Activated T-helper 1 cell treated with anti-CD3 and anti-CD28 coated beads, Interleukin-12 subunit alpha, Interleukin-12 subunit beta, Interleukin-2, Interleukin-4 antibody, amounts not matched to agents 30 ng/mL and 10 ng/mL and 1 ng/mL, durations not matched to agents 14 hours and 24 hours and 36 hours (primary cell): ENCODE measurements at regions of chr22 and their contacts with region 1.

Region 1: GRCh38 chr22:21001560-21002325 is at the start of gene THAP7:
- DNase-seq: peak; percentile 92
- H3K4me3 Mint-ChIP-seq: peak within 1 kb of the TSS; percentile 89
- H3K27ac Mint-ChIP-seq: peak within 1 kb of the TSS; percentile 99
- H3K4me1 Mint-ChIP-seq: peaks cover 8% of the 10 kb centered on the region
- H3K27me3 Mint-ChIP-seq: no peaks in the 10 kb centered on the region
- total RNA-seq, gene THAP7: 35.1 and 36.8 TPM in 2 replicates

Region 2: DNA sequence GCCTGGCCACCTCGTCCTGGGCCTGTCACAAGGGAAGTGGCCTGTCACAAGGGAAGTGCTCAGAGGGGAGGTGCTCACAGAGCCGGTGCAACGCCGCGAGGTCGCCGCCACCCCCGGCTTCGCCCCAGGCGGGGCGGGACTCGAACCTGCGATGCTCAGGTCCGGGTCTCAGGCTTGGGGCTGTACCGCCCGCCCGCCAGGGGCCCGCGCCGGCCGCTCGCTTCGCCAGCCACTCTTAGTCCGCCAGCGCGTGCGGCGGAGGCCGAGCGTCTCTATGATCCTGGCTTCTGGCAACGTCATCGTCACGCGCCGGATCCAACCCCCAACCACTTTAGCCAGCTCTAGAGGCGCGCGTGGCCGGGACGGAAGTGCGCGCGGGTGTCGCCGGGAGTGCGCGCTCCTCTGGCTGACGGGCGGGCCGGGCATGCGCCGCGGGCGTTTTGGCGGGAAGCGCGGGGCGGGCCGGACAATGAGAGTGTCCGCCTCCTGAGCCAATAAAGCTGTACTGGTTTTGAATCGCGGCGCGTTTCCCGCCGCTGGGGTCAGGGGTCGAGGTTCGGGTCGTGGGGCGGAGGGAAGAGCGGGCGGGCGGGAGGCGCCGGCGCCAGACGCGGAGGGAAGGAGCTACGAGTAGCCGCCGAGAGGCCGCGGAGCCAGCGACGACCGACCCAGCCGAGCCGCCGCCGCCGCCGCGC is 884.6 kb before region 1 on chr22 and contains the start of gene TRMT2A:
- intact Hi-C with region 1: loop called (anchors 10 kb)
- DNase-seq: peak; percentile 97
- H3K4me3 Mint-ChIP-seq: peak within 1 kb of the TSS; percentile 97
- H3K27ac Mint-ChIP-seq: peak within 1 kb of the TSS; percentile 96
- H3K4me1 Mint-ChIP-seq: peaks cover 30% of the 10 kb centered on the region
- H3K27me3 Mint-ChIP-seq: peaks cover 3% of the 10 kb centered on the region
- total RNA-seq, gene TRMT2A: 142 and 161 TPM in 2 replicates

Region 3: DNA sequence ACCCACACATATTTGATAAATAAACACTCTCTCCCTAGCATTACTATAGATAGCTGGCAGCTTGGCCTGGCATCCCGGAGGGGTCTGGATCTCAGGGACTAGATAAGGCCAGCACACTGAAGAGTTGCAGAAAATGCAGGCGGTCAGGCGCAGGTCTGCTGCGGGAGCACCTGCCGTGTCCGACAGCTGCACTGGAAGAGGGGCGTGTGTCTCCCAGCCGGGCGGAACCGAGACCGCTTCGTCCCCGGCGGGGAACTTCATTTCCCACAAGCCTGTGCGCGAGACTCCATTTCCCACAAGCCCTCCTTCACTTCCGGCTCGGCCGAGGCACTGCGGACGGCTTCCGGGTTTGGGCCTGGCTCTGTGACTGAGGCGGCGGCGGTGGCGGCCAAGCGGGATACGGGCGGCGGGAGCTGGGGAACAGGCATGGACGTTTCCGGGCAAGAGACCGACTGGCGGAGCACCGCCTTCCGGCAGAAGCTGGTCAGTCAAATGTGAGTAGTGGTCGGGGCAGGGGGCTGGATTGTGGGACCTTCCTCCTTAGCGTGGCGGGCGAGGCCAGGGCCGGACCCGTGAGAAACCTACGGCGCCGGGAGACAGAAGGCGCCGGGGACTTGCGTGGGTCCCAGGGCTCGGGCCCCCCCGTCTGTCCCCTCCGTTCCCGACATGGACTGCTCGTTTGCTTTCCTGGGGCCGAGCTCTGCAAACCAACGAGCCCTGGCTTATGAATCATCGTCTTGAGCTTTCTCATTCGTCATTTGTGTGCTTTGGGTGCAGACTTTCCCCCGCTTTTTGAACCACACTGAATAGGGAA is 494.3 kb before region 1 on chr22 and contains the start of gene MED15:
- intact Hi-C with region 1: loop called (anchors 5 kb)
- DNase-seq: peak; percentile 88
- H3K4me3 Mint-ChIP-seq: peak within 1 kb of the TSS; percentile 95
- H3K27ac Mint-ChIP-seq: peak within 1 kb of the TSS; percentile 96
- H3K4me1 Mint-ChIP-seq: peaks cover 50% of the 10 kb centered on the region
- H3K27me3 Mint-ChIP-seq: no peaks in the 10 kb centered on the region
- total RNA-seq, gene MED15: 103 and 110 TPM in 2 replicates

Region 4: DNA sequence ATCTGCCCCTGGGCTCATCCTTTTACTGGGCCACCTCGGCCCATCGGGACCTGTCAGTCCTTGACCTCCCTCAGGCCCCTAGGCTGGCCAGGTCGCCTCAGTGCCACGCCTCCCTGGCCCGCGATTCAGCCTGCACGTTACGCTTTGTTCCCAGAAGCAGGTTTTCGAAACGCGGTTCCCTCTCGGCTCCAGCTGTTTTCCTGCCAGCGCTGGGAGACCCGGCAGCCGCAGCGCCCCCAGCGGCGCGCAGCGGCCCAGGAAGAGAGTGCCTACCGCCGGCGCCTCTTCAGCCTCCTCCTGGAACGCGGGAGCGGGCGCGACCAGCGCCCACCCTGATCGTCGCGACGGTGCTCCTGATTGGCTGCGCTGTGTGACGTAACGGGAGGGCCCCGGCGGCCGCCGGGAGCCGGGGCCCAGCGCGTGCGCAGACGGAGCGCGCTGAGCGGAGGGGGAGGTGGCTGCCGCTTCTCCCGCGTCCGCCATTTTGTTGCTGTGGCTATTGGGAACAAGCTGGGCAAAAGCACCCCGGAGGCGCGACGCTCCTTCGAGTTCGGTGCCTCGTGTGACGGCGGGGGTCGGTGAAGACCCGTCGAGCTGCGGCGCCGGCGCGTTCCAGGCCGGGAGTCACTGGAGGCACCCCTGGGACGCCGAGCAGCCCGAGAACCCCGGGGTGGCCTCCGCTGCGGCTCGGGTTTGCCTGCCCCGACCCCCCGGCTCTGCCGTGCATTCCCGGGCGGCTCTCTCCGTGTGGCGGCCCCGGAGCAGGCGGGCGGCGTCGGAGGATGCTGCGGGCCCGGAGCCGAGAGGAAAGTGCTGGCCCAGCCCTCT is 84.5 kb before region 1 on chr22 and contains the start of gene CRKL:
- intact Hi-C with region 1: loop called (anchors 1 kb)
- DNase-seq: peak; percentile 96
- H3K4me3 Mint-ChIP-seq: peak within 1 kb of the TSS; percentile 99
- H3K27ac Mint-ChIP-seq: peak within 1 kb of the TSS; percentile 88
- H3K4me1 Mint-ChIP-seq: peaks cover 34% of the 10 kb centered on the region
- H3K27me3 Mint-ChIP-seq: peaks cover 3% of the 10 kb centered on the region
- total RNA-seq, gene CRKL: 78.2 and 79.2 TPM in 2 replicates

Region 5: DNA sequence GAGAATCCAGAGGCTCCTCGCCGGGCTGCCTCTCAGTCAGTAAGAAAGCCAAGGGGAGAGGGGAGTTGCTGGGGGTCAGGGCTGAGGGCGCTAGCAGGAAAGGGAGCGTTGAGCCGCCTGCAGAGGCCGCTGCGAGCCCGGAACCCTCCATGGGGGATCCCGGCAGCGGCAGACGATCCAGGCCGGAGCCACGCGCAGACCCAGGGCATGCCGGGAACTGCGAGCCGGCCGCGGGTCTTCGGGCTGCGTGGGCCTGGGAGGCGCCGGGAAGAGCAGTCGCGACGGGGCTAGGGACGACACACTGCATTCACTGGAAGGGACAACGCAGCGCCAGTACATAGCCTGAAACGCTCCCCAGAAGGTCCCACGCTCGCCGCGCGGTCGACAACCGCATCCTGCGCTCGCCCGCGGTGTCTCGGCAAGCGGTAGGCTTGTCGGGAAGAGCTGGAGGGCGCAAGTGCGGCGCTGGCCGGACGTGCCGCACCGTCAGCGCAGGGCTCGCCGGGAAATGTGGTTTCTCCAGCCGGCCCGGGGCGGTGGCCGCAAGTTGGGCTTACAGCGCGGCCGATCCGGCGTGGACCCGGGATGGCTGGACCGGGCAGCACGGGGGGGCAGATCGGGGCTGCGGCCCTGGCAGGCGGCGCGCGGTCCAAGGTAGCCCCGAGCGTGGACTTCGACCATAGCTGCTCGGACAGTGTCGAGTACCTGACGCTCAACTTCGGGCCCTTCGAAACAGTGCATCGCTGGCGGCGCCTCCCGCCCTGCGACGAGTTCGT is 19.8 kb before region 1 on chr22 and contains the start of gene LZTR1:
- intact Hi-C with region 1: loop called (anchors 1 kb)
- DNase-seq: peak; percentile 68
- H3K4me3 Mint-ChIP-seq: peak within 1 kb of the TSS; percentile 90
- H3K27ac Mint-ChIP-seq: peak within 1 kb of the TSS; percentile 87
- H3K4me1 Mint-ChIP-seq: peaks cover 44% of the 10 kb centered on the region
- H3K27me3 Mint-ChIP-seq: no peaks in the 10 kb centered on the region
- total RNA-seq, gene LZTR1: 81.9 and 87.5 TPM in 2 replicates

Region 6: DNA sequence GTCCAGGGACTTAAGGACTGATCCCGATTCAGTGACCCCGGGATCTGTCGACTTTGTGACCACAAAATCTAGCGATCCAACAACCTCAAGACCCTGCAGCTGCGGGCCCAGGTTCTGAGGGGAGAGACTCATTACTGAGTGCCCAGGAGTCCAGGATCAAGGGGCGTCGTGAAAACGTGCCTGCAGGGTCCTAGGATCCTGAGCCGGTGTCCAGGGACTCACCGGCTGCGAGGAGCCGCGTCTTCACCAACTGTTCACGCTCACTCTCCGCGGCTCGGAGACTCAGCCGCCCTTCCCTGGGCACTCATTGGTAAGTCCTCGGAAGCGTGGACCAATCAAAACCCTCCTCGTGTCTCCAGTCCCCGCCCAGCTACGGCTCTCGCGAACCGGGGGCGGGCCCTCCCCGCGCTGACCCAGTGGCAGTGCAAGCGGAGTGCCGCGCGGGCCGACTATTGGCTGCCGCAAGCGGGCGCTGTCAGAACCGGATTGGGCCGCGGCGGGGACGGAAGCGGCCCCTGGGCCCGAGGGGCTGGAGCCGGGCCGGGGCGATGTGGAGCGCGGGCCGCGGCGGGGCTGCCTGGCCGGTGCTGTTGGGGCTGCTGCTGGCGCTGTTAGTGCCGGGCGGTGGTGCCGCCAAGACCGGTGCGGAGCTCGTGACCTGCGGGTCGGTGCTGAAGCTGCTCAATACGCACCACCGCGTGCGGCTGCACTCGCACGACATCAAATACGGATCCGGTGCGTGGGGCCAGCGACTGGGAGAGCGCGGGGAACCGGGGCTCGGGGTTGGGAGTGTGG is 640.2 kb after region 1 on chr22 and contains the start of gene SDF2L1:
- intact Hi-C with region 1: loop called (anchors 5 kb)
- DNase-seq: peak; percentile 99
- H3K4me3 Mint-ChIP-seq: peak within 1 kb of the TSS; percentile 90
- H3K27ac Mint-ChIP-seq: peak within 1 kb of the TSS; percentile 94
- H3K4me1 Mint-ChIP-seq: peaks cover 39% of the 10 kb centered on the region
- H3K27me3 Mint-ChIP-seq: peaks cover 10% of the 10 kb centered on the region
- total RNA-seq, gene SDF2L1: 98.8 and 100 TPM in 2 replicates